Heart right ventricle (tissue), 16 donors: ENCODE measurements at regions of chr1 and their contacts with region 1.

Region 1: DNA sequence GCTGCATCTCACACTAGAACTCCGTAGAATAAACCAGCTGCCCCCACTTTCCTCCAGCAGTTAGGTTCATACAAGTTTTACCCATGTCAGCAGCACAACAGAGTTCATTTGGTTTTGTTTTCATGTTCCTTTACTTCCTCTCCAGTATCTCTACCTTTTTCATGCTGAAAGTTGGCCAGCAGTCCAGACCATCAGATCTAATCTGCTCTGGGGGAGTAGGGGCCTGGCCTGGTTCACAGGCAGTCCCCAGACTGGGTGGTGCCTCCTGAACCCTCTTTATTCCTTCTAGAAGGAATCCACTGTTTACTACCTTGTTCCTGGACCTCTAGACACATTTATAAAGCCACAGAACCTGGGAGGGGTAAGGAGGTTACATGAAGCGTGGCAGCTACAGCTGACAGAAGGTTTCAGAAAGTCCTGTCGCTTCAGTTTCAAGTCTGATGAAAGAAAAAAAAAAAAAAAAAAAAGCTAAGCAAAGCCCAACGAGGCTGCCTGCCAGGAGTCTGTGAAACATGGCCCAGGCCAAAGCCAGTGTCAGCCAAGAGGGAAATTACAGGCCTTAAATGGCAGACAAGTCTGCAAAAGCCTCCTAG is 184.6 kb upstream of the JUN start:
- DNase-seq: peak; percentile 78 to 84
- ATAC-seq: peak; percentile 73 to 89 (median 84)
- H3K4me3 ChIP-seq: no peak overlapping the region
- H3K27ac ChIP-seq: peak overlapping the region; percentile 67 to 91 (median 85)
- H3K4me1 ChIP-seq: peaks cover 5 to 33% (median 26%) of the 10 kb centered on the region in 9 donors
- H3K27me3 ChIP-seq: no peaks in the 10 kb centered on the region
- CTCF ChIP-seq: peak in 2 of 9 donors; percentile 3 to 12

Region 2: DNA sequence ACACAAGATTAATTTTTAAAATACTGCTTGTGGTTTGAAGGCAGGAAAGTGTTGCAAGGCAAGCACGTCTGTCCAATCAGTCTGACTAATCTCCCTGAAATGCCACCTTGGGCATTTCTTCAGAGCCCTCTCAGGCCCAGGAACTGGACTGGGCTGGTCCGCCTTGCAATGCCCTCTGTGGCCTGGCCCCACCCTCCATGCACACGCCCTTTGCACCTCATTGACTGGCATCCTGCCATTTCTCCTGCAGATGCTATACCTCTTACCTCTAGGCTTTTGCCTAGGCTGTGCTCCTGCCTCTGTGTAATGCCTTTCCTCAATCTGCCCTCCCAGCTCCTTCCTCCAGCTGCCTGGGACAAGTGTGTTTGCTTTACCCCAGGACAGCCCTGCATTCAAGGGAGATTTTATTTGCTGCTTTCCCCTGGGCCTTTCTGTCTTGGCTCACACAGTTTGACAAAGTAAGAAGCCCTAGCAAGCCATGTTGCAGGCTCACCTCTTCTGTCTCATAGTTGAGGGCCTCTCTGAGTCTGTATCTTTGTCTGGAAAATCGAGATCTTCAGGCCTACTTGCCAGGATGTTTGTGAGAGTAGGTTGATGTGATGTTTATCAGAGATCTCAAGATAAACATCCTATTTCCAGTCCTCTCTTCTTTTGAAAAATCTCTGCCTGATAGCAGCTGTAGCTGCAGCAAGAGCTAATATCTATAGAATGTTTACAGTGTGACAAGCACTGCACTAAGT is 35.4 kb before region 1 on chr1:
- intact Hi-C with region 1: loop called in 1 of 10 experiments (anchors 5 kb)
- DNase-seq: no peak
- ATAC-seq: peak in 3 of 8 donors; percentile 29 to 53 (median 33)
- H3K4me3 ChIP-seq: no peak overlapping the region
- H3K27ac ChIP-seq: no peak overlapping the region
- H3K4me1 ChIP-seq: peaks cover 0 to 15% (median 0%) of the 10 kb centered on the region in 9 donors
- H3K27me3 ChIP-seq: no peaks in the 10 kb centered on the region
- CTCF ChIP-seq: no peak